ENCODE measurements at regions of chr10 and their contacts with region 1.

Region 1: GRCh38 chr10:122786269-122786668 is 59.4 kb downstream of the CUZD1 start:
- DNase-seq: no peak
- H3K4me3 ChIP-seq: no peak overlapping the region
- H3K27ac ChIP-seq: no peak overlapping the region
- H3K27me3 ChIP-seq: peaks cover 0 to 6% (median 0%) of the 10 kb centered on the region in 45 donors
- CTCF ChIP-seq: no peak

Region 2: GRCh38 chr10:122879339-122880273 is 93.3 kb after region 1 on chr10 and contains the start of gene FAM24B:
- intact Hi-C with region 1: loop called in 1 of 2 experiments (anchors 10 kb)
- DNase-seq: peak; percentile 77 to 93 (median 90)
- H3K4me3 ChIP-seq: peak within 1 kb of the TSS; percentile 55 to 90 (median 76)
- H3K27ac ChIP-seq: peak within 1 kb of the TSS in 14 of 59 donors; percentile 33 to 73 (median 56)
- H3K27me3 ChIP-seq: no peaks in the 10 kb centered on the region
- CTCF ChIP-seq: peak in 27 of 56 donors; percentile 4 to 46 (median 26)
- total RNA-seq, gene FAM24B: 1.5 to 9.2 (median 4.9) TPM

Region 3: DNA sequence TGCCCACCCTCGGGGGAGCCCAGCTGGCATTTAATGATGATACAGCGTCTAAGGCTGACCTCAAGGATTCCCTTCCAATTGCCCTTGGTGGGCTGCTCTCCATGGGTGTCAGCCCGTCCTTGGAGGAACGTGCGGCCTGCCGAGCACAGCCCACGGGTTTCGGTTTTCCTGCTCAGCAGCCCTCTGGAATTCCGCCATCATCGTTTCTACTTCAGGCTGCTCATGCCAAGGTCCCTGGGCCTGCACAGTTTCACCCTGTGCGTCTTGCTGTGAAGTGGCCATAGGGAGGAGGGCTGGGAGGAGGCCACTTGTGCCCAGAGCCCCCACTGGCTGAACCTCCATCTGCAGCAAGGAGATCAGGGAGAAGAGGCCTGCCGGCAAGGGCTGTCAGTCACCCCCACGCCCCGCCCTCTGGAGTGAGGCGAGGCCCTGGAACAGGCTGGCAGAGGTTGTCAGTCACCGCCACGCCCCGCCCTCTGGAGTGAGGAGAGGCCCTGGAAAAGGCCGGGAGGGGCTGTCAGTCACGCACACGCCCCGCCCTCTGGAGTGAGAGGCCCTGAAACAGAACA is 1224.4 kb after region 1 on chr10:
- intact Hi-C with region 1: no loop called
- DNase-seq: peak in 2 of 10 donors; percentile 30 to 44
- H3K4me3 ChIP-seq: no peak overlapping the region
- H3K27ac ChIP-seq: peak overlapping the region in 1 of 59 donors; percentile 2
- H3K27me3 ChIP-seq: no peaks in the 10 kb centered on the region
- CTCF ChIP-seq: no peak

Measured in dorsolateral prefrontal cortex (tissue), 120 donors.